ENCODE measurements at regions of chr17 and their contacts with region 1.

Region 1: DNA sequence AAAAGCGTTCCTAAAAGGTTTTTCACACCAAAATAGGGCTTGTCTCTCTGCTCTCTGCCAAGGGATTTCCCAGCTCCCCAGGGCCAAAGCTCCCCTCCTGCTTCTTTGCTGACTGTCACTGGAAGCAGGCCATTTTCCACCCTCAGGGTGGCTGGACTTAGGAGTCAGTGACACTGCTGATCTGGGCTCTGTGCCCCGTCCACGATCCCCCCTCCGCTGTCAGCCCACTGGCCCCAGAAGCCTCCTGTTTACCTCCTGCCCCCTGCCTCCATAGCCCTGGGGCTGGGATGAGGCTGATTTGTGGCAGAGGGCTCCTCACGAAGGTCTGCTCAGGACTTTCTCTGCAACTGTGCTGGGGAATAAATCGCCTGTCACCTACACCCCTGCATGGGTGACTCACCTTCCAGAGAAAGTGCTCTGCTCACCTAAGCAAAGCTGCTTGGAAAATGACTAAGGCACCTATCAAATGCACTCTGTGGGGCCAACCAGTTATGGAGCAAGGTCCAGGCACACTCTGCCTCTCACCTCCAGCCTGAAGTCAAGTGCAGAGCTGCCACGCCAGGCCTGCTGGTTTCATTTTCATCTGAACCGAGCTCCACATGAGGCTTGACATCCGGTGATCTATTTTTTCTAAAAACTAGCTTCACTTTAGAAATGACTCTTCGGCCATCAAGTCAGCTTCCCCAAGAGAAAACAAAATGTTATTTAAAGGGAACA is 4.9 kb downstream of the MAP3K14 start:
- DNase-seq: peak; percentile 55 to 66
- ATAC-seq: peak in 7 of 8 donors; percentile 7 to 63 (median 41)
- H3K4me3 ChIP-seq: peak overlapping the region in 9 of 10 donors; percentile 1 to 41 (median 16)
- H3K27ac ChIP-seq: peak overlapping the region; percentile 70 to 98 (median 96)
- H3K4me1 ChIP-seq: peaks cover 33 to 93% (median 88%) of the 10 kb centered on the region in 9 donors
- H3K27me3 ChIP-seq: no peaks in the 10 kb centered on the region
- CTCF ChIP-seq: no peak

Region 2: DNA sequence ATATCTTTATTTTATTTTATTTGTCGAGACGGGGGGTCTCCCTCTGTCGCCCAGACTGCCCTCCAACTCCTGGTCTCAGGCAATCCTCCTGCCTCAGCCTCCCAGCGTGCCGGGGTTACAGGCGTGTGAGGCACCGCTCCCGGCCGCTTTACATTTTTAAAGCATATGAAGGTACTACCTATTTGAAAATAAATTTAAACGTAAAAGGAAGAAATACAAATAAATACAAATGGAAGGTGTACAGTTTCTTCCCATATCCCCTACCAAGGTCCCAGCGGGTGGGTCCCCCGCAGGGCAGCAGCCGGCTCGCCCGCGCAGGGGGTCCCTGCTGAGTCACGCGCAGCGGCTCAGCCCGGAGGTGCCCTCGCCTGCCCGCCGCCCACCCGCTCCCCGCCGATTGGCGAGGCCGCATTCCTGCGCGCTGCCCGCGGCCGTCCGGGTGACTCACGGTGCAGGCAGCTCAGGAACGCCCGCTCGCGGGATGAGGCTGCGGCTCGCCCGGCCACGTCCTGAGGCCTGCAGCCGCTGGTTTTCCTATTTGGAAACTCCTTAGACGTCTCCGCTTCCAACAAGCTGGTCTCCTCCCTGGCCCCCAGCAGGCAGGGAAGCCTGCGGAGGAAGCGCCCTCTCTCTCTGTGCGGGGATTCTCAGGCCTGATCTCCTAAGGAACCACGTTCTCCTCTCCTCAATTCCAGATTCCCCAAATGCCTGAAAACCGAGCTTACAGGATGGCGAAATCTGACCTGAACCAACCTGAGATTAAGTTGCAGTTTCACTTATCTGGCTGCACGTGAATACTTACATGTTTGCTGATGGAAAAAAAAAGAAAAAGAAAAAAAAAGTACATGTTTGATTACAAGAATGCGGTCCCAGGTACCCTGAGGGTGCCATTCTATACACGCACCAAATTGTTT is 59.8 kb after region 1 on chr17:
- intact Hi-C with region 1: loop called in 8 of 10 experiments (anchors 1 to 10 kb)
- DNase-seq: peak; percentile 73 to 80
- ATAC-seq: peak; percentile 91 to 96 (median 94)
- H3K4me3 ChIP-seq: peak overlapping the region in 9 of 10 donors; percentile 1 to 46 (median 37)
- H3K27ac ChIP-seq: peak overlapping the region; percentile 57 to 91 (median 81)
- H3K4me1 ChIP-seq: peaks cover 6 to 44% (median 29%) of the 10 kb centered on the region in 9 donors
- H3K27me3 ChIP-seq: peaks cover 0 to 11% (median 0%) of the 10 kb centered on the region in 7 donors
- CTCF ChIP-seq: peak in 2 of 9 donors; percentile 14 to 22